Tibial artery (tissue), 4 donors: ENCODE measurements at regions of chr12 and their contacts with region 1.

Region 1: GRCh38 chr12:95117178-95117599 is 43.8 kb upstream of the NR2C1 start:
- DNase-seq: peak; percentile 67
- H3K4me3 ChIP-seq: no peak overlapping the region
- H3K27ac ChIP-seq: peak overlapping the region; percentile 51 to 57
- H3K4me1 ChIP-seq: peaks cover 0 to 31% (median 22%) of the 10 kb centered on the region in 4 donors
- H3K27me3 ChIP-seq: no peaks in the 10 kb centered on the region
- CTCF ChIP-seq: peak; percentile 61 to 88

Region 2: DNA sequence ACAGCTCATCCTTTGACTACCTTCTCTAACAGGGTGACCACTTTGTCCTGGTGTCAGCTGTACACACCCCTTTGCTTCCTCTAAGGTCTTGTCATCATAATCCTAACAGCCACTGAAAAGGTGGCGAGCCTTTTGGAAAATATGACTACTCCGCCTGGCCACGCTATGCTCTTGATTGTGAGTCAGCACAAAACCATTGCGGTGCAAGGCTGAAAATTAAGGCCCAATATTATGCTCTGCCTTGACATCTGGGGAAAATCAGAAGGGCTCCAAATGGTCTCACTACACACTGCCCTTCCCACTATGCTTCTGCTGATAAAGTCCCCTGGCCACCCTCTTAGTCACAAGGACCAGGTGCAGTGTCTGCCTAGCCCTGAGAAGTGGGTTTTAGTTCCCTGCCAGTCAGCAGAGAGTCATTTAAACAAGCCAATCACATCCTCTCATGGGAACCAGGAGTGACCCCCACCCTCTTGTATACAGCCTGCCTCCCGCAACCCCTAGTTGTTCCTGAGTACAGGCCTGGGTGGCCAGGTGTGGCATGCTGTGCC is 65.8 kb after region 1 on chr12:
- intact Hi-C with region 1: no loop called
- DNase-seq: no peak
- H3K4me3 ChIP-seq: no peak overlapping the region
- H3K27ac ChIP-seq: no peak overlapping the region
- H3K4me1 ChIP-seq: no peaks in the 10 kb centered on the region
- H3K27me3 ChIP-seq: no peaks in the 10 kb centered on the region
- CTCF ChIP-seq: no peak

Region 3: GRCh38 chr12:95532851-95533250 is 415.7 kb after region 1 on chr12:
- intact Hi-C with region 1: loop called (anchors 10 kb)
- DNase-seq: no peak
- H3K4me3 ChIP-seq: no peak overlapping the region
- H3K27ac ChIP-seq: no peak overlapping the region
- H3K4me1 ChIP-seq: no peaks in the 10 kb centered on the region
- H3K27me3 ChIP-seq: no peaks in the 10 kb centered on the region
- CTCF ChIP-seq: no peak